ENCODE measurements at regions of chr2 and their contacts with region 1.

Region 1: GRCh38 chr2:144516981-144517865 is 2.7 kb downstream of the ZEB2 start:
- DNase-seq: peak; percentile 49 to 68
- ATAC-seq: peak; percentile 15 to 75 (median 38)
- H3K4me3 ChIP-seq: peak overlapping the region; percentile 69 to 98 (median 79)
- H3K27ac ChIP-seq: peak overlapping the region; percentile 96 to 100 (median 98)
- H3K4me1 ChIP-seq: peaks cover 0 to 43% (median 15%) of the 10 kb centered on the region in 9 donors
- H3K27me3 ChIP-seq: peaks cover 0 to 8% (median 3%) of the 10 kb centered on the region in 7 donors
- CTCF ChIP-seq: no peak

Region 2: GRCh38 chr2:143524119-143524553 is 993.1 kb before region 1 on chr2:
- intact Hi-C with region 1: loop called in 1 of 10 experiments (anchors 10 kb)
- DNase-seq: no peak
- ATAC-seq: peak in 5 of 8 donors; percentile 6 to 60 (median 52)
- H3K4me3 ChIP-seq: no peak overlapping the region
- H3K27ac ChIP-seq: peak overlapping the region in 8 of 10 donors; percentile 1 to 55 (median 48)
- H3K4me1 ChIP-seq: peaks cover 0 to 50% (median 12%) of the 10 kb centered on the region in 9 donors
- H3K27me3 ChIP-seq: no peaks in the 10 kb centered on the region
- CTCF ChIP-seq: no peak

Region 3: DNA sequence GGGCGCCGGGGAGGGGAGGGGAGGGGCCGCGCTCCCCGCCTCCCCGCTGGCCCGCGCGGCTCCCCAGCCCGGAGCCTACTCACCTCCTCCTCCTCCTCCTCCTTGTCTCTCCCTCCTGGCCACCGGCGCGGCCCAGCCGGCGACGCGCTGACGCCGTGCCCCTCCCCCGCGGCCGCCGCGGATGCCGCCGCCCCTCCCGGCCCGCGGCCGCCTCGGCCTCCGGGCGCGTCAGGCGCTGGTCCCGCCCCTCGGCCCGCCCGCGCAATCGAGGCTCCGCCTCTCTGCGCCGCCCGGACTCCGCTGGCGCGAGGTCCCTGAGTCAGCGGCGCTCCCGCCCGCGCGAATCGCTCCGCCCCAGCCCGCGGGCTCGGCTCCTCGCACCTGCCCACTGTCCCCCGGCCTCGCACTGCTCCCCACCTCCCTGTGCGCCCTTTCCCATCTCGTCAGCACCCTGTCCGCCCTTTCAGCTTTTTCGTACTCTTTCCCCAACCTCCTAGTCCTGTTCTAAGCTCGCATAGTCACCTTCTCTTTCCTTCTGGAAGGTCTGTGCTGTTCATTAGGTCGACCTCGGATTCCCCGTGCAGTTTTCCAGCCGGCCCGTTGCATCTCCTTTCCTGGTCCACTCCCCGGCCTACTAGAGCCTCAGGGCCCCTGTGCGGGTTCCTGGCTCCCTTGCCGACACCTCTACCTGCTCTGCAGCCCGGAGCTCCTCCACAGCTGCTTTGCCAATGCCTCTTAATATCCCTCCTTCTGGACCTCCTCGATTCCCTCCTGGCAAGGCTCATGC is 184.7 kb before region 1 on chr2:
- intact Hi-C with region 1: loop called in 7 of 10 experiments (anchors 5 kb)
- DNase-seq: peak; percentile 80 to 90
- ATAC-seq: peak; percentile 94 to 98 (median 95)
- H3K4me3 ChIP-seq: peak overlapping the region in 9 of 10 donors; percentile 58 to 97 (median 89)
- H3K27ac ChIP-seq: peak overlapping the region; percentile 78 to 96 (median 92)
- H3K4me1 ChIP-seq: peaks cover 0 to 22% (median 16%) of the 10 kb centered on the region in 9 donors
- H3K27me3 ChIP-seq: no peaks in the 10 kb centered on the region
- CTCF ChIP-seq: no peak

Region 4: GRCh38 chr2:144414324-144414845 is 102.8 kb before region 1 on chr2:
- intact Hi-C with region 1: no loop called
- DNase-seq: no peak
- ATAC-seq: peak in 4 of 8 donors; percentile 44 to 94 (median 60)
- H3K4me3 ChIP-seq: no peak overlapping the region
- H3K27ac ChIP-seq: peak overlapping the region in 4 of 10 donors; percentile 1 to 87 (median 56)
- H3K4me1 ChIP-seq: peaks cover 0 to 51% (median 3%) of the 10 kb centered on the region in 9 donors
- H3K27me3 ChIP-seq: no peaks in the 10 kb centered on the region
- CTCF ChIP-seq: no peak

Region 5: DNA sequence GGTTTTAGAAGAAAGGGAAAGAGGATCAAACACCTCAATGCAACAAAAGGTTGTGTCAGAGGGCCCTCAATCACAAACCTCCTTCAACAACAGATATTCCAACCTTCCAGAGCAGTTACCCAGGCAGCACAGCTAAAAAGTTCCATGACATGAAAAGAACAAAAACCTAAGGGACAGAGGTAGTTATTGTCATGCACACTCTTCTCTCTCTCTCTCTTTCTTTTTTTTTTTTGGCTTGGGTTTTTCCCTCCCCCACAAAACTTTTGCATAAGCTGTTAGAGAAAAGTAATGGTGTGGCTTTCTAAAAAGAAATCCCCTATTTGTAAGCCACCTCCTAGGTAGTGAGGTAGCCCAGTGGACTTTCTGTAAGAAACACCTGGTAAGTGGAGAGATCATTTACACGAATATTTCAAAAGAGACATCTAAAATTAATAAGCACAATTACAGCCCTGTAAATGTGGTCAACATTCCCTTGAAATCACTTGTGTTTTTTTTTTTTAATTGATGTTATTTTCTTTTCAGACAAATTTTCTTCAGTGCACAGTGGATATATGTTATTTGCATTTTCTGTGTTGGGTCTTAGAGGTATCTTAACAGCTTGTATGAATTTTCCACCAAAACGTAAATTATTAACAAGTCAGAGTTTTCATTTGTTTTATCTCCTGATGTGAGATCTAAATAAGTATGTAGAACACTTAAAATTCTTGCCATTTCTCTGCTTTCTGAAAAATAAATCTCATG is 45.7 kb before region 1 on chr2:
- intact Hi-C with region 1: no loop called
- DNase-seq: no peak
- ATAC-seq: no peak
- H3K4me3 ChIP-seq: no peak overlapping the region
- H3K27ac ChIP-seq: peak overlapping the region in 1 of 10 donors; percentile 2
- H3K4me1 ChIP-seq: peaks cover 0 to 91% (median 83%) of the 10 kb centered on the region in 9 donors
- H3K27me3 ChIP-seq: no peaks in the 10 kb centered on the region
- CTCF ChIP-seq: no peak

Region 6: DNA sequence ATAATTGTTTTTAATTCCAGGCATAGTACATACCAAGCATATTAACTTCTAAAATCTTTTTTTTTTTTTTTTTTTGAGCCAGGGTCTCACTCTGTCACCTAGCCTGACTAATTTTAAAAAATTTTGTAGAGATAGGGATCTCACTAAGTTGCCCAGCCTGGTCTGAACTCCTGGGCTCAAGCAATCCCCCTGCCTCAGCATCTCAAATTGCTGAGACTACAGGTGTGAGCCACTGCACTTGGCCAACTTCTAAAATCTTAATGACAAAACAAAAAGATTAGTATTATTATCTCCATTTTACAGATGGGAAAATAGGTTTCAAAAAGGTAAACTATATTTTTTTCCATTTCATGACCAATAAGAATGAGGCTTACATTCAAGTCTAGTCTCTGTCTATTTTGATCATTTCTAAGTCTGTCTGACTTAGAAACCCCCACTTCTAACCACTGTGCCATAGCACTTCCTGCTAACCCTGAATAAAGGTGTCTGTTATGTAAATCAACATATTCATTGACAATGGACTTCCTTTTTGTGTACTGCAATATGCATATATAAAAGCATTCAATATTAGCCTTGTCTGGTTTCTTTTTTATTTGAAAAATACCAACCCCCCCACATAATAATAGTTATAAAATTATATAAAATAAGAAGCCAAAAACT is 31.4 kb after region 1 on chr2:
- intact Hi-C with region 1: no loop called
- DNase-seq: no peak
- ATAC-seq: no peak
- H3K4me3 ChIP-seq: no peak overlapping the region
- H3K27ac ChIP-seq: no peak overlapping the region
- H3K4me1 ChIP-seq: peaks cover 0 to 23% (median 0%) of the 10 kb centered on the region in 9 donors
- H3K27me3 ChIP-seq: no peaks in the 10 kb centered on the region
- CTCF ChIP-seq: no peak

Region 7: DNA sequence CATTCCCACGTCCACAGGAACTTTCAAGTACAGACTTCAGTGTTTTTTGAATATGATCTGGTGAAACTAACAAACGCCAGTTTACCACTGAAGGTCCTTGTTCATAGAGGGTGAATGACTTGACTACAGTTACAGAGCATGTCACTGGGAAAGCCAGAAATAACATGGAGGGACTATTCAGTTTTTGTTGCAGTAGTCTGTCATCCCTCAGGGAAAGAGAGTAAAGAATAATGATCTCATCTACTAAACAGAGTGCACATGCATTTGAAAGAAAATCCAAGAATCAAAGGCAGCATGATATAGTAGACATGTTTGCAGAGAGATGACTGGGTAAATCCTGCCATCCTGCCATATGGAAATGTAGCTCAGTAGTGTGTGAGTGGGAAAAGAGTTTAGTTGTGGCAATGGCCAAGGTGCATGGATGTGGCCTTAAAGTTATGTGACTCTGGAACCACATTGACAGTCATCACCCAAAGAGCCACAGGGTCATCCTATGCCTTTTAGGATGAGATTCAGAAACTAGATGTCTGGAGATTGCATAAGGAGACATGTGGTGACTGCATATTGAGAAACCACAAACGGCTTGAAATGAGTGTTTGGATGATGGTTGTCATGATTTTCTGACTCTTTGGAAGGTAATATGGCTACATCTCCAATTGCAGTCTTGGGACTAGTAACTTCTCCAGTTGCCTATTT is 128.0 kb after region 1 on chr2:
- intact Hi-C with region 1: loop called in 1 of 10 experiments (anchors 10 kb)
- DNase-seq: no peak
- ATAC-seq: peak in 5 of 8 donors; percentile 20 to 69 (median 44)
- H3K4me3 ChIP-seq: no peak overlapping the region
- H3K27ac ChIP-seq: peak overlapping the region in 3 of 10 donors; percentile 2 to 26 (median 7)
- H3K4me1 ChIP-seq: peaks cover 0 to 21% (median 0%) of the 10 kb centered on the region in 9 donors
- H3K27me3 ChIP-seq: no peaks in the 10 kb centered on the region
- CTCF ChIP-seq: no peak

Region 8: DNA sequence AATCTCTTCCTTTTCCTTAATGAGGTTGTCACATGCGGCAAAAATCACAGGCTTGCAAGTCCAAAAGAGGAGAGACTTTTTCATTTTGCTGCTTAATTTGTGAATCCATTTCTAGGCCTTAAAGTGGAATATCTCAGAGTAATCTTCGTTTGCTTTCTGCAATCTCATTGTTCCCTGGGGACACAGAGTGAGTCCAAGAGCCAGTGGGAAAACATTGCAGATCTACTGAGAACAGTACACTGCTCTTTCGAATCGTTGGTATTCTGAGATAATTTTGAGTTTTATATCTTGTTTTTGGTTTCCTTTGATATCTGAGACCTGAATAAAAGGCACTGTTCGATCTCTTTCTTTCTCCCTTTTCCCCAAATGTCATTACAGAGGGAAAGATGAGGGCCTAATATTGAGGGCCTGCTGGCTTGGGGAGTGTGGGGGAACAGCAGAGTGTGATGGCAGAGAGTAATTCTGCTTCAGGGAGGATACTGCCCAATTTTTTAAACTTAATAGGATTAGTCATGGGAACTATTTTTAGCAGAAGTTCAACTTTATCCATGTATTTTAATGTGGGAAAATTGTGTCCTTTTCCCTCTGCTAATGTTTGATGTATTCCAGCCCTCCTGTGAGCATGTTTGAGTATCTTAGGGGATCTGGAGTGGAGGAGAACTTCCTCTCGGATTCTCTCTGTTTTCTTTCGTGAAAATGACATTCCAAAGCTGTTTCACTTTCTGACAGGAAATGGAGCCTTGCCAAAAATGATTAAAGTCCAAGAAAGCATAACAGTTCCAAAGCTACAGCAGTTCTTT is 420.9 kb after region 1 on chr2:
- intact Hi-C with region 1: loop called in 4 of 10 experiments (anchors 5 to 10 kb)
- DNase-seq: peak in 1 of 2 donors; percentile 50
- ATAC-seq: peak; percentile 79 to 91 (median 84)
- H3K4me3 ChIP-seq: no peak overlapping the region
- H3K27ac ChIP-seq: peak overlapping the region; percentile 39 to 81 (median 70)
- H3K4me1 ChIP-seq: peaks cover 0 to 50% (median 29%) of the 10 kb centered on the region in 9 donors
- H3K27me3 ChIP-seq: no peaks in the 10 kb centered on the region
- CTCF ChIP-seq: no peak

Region 9: DNA sequence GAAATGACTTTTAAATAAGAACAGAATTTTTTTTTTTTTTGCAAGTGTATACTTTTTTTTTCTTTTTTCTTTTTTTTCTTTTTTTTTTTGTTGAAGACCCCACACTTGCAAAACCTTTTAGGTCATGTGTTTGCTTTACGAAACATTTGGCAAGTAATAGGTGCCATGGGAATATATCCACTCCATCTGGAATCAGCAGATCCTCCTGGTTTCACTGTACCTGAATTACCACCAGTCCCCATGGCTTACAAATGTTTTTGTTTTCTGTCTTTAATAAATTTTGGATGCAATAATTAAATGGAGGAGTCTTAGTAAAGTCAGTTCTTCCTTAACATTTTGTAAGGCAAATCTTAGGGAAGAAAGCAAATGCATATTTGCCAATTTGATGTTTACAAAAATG is 562.4 kb after region 1 on chr2:
- intact Hi-C with region 1: loop called in 1 of 10 experiments (anchors 5 kb)
- DNase-seq: no peak
- ATAC-seq: no peak
- H3K4me3 ChIP-seq: no peak overlapping the region
- H3K27ac ChIP-seq: peak overlapping the region in 4 of 10 donors; percentile 0 to 45 (median 36)
- H3K4me1 ChIP-seq: peaks cover 0 to 16% (median 0%) of the 10 kb centered on the region in 9 donors
- H3K27me3 ChIP-seq: no peaks in the 10 kb centered on the region
- CTCF ChIP-seq: no peak